Heart left ventricle (tissue), 16 donors: ENCODE measurements at regions of chr1 and their contacts with region 1.

Region 1: GRCh38 chr1:210711825-210712612 is 383.3 kb downstream of the HHAT start:
- DNase-seq: peak in 2 of 5 donors; percentile 34 to 48
- ATAC-seq: peak in 3 of 4 donors; percentile 39 to 80 (median 54)
- H3K4me3 ChIP-seq: no peak overlapping the region
- H3K27ac ChIP-seq: no peak overlapping the region
- H3K4me1 ChIP-seq: peaks cover 0 to 2% (median 0%) of the 10 kb centered on the region in 12 donors
- H3K27me3 ChIP-seq: no peaks in the 10 kb centered on the region
- CTCF ChIP-seq: peak in 5 of 12 donors; percentile 14 to 44 (median 23)
- POLR2A ChIP-seq: no peak

Region 2: GRCh38 chr1:210951279-210951678 is 239.3 kb after region 1 on chr1:
- intact Hi-C with region 1: loop called in 1 of 10 experiments (anchors 5 kb)
- DNase-seq: no peak
- ATAC-seq: no peak
- H3K4me3 ChIP-seq: no peak overlapping the region
- H3K27ac ChIP-seq: no peak overlapping the region
- H3K4me1 ChIP-seq: no peaks in the 10 kb centered on the region
- H3K27me3 ChIP-seq: no peaks in the 10 kb centered on the region
- CTCF ChIP-seq: no peak
- POLR2A ChIP-seq: no peak